Activated naive CD4-positive, alpha-beta T cell treated with anti-CD3 and anti-CD28 coated beads for 36 hours (primary cell): ENCODE measurements at regions of chr18 and their contacts with region 1.

Region 1: DNA sequence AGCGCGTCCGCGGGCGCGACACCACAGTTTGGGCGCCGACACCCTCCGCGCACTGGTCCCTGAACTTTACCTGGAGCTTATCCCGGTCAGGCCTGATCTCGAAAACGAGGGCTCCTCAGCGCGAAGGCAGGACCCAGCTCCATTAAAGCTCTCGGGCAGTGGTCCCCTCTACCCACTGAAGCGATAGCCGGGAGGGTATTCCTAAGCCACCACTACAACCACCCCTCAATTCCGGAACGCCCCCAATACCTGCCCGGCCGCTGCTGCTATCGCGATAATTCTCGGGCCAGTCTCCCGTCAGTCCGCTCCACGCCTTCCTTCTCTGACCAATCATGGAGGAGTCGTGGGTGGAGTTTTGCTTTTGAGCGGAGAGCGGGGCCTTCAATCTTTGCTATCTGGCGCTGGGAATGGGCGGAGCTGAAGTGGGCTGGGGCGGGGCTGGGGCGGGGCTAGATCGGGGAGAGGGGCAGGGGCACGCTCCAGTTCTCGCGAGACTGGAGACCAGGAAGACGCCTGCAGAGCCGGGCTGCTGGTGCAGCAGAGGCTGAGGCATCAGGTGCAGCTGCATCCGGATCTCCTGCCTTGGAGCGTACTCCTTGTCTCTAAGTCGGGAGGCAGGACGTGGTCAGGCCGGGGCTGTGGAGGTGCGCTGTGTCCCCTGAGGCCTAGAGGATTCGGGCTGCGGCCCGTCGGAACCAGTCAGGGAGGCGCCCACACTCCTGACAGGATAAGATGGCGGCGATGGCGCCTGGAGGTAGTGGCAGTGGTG is at the starts of genes PIGN and RELCH:
- DNase-seq: peak; percentile 97
- H3K4me3 Mint-ChIP-seq: peak within 1 kb of the TSS; percentile 99
- H3K27ac Mint-ChIP-seq: peak within 1 kb of the TSS; percentile 90
- H3K4me1 Mint-ChIP-seq: peaks cover 45% of the 10 kb centered on the region
- H3K27me3 Mint-ChIP-seq: no peaks in the 10 kb centered on the region
- total RNA-seq, gene PIGN: 21.2 to 22.6 TPM
- total RNA-seq, gene RELCH: 15.7 to 16.3 TPM

Region 2: GRCh38 chr18:61883547-61883946 is 303.4 kb before region 1 on chr18:
- CTCF ChIA-PET with region 1: no interaction called
- intact Hi-C with region 1: no loop called
- DNase-seq: no peak
- H3K4me3 Mint-ChIP-seq: no peak overlapping the region
- H3K27ac Mint-ChIP-seq: no peak overlapping the region
- H3K4me1 Mint-ChIP-seq: no peaks in the 10 kb centered on the region
- H3K27me3 Mint-ChIP-seq: peaks cover 6% of the 10 kb centered on the region

Region 3: DNA sequence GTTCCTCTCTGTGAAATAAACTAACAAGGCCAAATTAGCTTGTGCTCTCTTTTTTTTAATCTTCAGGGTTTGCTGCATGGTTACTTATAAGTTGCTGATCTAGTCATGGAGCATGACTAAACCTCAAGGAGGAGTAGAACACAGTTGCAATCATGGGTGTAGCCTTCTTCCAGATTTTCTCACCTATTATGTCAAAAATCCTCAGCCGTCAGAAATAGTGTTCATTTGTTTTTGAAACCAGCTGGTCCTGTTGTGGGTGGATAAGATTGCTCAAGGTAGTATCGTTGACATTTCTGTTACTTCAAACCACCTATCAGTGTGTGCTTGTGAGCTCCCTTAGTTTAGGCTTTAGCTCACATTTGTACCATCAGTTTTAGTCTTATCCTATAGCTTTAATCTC is 11.3 kb after region 1 on chr18:
- CTCF ChIA-PET with region 1: interaction called, 9 read pairs
- intact Hi-C with region 1: loop called (anchors 1 kb)
- DNase-seq: no peak
- H3K4me3 Mint-ChIP-seq: no peak overlapping the region
- H3K27ac Mint-ChIP-seq: no peak overlapping the region
- H3K4me1 Mint-ChIP-seq: peaks cover 51% of the 10 kb centered on the region
- H3K27me3 Mint-ChIP-seq: no peaks in the 10 kb centered on the region

Region 4: GRCh38 chr18:62312851-62313250 is 125.9 kb after region 1 on chr18:
- CTCF ChIA-PET with region 1: no interaction called
- intact Hi-C with region 1: no loop called
- DNase-seq: no peak
- H3K4me3 Mint-ChIP-seq: no peak overlapping the region
- H3K27ac Mint-ChIP-seq: no peak overlapping the region
- H3K4me1 Mint-ChIP-seq: no peaks in the 10 kb centered on the region
- H3K27me3 Mint-ChIP-seq: no peaks in the 10 kb centered on the region

Region 5: DNA sequence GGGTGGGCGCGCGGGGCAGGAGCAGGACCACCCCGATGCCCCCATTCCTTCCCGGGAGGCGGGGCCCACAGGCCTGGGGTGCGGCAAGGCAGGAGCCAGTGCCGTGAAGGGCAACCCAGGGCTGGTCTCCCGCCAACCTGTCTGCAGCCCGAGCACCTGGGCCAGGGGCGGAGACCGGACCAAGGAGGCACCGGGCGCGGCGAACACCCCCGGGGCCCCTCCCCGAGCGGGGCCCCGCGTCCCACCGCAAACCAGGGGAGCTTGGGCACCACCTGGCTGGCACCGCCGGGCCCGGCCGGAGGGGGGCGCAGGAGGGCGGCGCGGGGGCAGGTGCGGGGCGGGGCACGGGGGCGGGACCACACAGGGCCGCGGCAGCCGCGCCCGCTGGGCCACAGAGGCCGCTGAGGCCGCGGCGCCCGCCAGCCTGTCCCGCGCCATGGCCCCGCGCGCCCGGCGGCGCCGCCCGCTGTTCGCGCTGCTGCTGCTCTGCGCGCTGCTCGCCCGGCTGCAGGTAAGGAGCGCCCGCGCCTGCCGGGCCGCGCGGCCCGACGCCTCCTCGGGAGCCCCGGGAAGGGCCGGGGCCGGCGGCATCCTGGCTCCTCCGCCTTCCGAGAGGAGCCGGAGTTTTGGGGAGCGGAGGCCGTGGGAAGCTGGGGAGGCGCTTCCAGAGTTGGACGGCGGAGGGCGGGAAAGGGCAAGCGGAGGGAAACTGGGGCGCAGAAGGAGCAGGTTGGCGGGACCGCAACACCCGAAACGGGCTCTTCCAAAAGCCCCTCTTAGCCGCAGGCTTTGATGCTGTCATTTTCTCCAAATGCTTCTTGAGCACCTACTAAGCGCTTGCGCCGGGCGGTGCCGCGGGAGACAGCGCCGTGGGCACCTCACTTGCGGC is 138.2 kb after region 1 on chr18 and contains the start of gene TNFRSF11A:
- CTCF ChIA-PET with region 1: interaction called, 4 read pairs
- intact Hi-C with region 1: loop called (anchors 1 kb)
- DNase-seq: peak; percentile 73
- H3K4me3 Mint-ChIP-seq: peak within 1 kb of the TSS; percentile 77
- H3K27ac Mint-ChIP-seq: peak within 1 kb of the TSS; percentile 28
- H3K4me1 Mint-ChIP-seq: peaks cover 19% of the 10 kb centered on the region
- H3K27me3 Mint-ChIP-seq: peaks cover 70% of the 10 kb centered on the region
- total RNA-seq, gene TNFRSF11A: 3.1 to 3.5 TPM

Region 6: GRCh38 chr18:62784966-62785413 is 598.0 kb after region 1 on chr18:
- CTCF ChIA-PET with region 1: no interaction called
- intact Hi-C with region 1: loop called (anchors 10 kb)
- DNase-seq: no peak
- H3K4me3 Mint-ChIP-seq: no peak overlapping the region
- H3K27ac Mint-ChIP-seq: no peak overlapping the region
- H3K4me1 Mint-ChIP-seq: peaks cover 37% of the 10 kb centered on the region
- H3K27me3 Mint-ChIP-seq: peaks cover 5% of the 10 kb centered on the region

Region 7: DNA sequence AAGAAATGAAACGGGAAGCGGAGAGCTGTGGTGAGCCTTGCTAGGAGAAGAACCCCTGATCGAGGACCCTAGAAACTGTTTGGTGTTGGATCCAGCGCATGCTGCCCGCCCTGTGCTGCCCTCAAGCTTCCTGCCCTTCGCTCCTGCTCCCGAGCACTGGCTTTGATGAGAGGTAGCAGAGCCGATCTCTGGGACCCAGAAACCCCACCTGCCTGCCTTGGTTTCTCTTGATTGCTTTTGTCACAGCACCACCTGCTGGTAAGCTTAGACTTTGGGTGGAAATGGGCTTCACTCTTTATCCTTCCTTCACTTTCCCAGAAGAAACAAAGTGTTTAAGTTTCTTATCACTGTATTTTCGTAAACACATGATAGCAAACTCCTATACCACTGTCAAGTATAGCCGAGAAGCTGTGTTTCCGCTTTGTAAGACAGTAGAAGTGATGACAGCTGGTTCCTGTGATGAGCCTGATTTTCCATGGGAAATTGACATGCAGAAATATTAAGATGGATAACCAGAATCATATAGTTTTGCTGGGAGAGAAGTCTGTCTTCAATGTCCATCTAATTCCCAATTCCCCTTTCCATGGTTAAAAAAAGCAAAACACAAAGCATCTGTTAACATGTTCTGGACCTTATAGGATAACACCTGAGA is 795.8 kb after region 1 on chr18:
- CTCF ChIA-PET with region 1: no interaction called
- intact Hi-C with region 1: loop called (anchors 1 kb)
- DNase-seq: peak; percentile 75
- H3K4me3 Mint-ChIP-seq: no peak overlapping the region
- H3K27ac Mint-ChIP-seq: no peak overlapping the region
- H3K4me1 Mint-ChIP-seq: no peaks in the 10 kb centered on the region
- H3K27me3 Mint-ChIP-seq: no peaks in the 10 kb centered on the region

Region 8: GRCh38 chr18:63422087-63422809 is 1235.3 kb after region 1 on chr18 and contains the start of gene VPS4B:
- CTCF ChIA-PET with region 1: no interaction called
- intact Hi-C with region 1: loop called (anchors 1 kb)
- DNase-seq: peak; percentile 100
- H3K4me3 Mint-ChIP-seq: peak within 1 kb of the TSS; percentile 83
- H3K27ac Mint-ChIP-seq: peak within 1 kb of the TSS; percentile 95
- H3K4me1 Mint-ChIP-seq: peaks cover 28% of the 10 kb centered on the region
- H3K27me3 Mint-ChIP-seq: no peaks in the 10 kb centered on the region
- total RNA-seq, gene VPS4B: 28.7 to 30.1 TPM